ENCODE measurements at regions of chr6 and their contacts with region 1.

Region 1: GRCh38 chr6:23889001-23889400 is 237.0 kb upstream of the NRSN1 start:
- DNase-seq: no peak
- ATAC-seq: no peak
- H3K4me3 ChIP-seq: no peak overlapping the region
- H3K4me3 Mint-ChIP-seq: no peak overlapping the region
- H3K27ac ChIP-seq: no peak overlapping the region
- H3K27ac Mint-ChIP-seq: no peak overlapping the region
- H3K4me1 ChIP-seq: no peaks in the 10 kb centered on the region
- H3K4me1 Mint-ChIP-seq: no peaks in the 10 kb centered on the region
- H3K27me3 ChIP-seq: no peaks in the 10 kb centered on the region
- H3K27me3 Mint-ChIP-seq: peaks cover 0 to 4% (median 0%) of the 10 kb centered on the region in 5 donors

Region 2: GRCh38 chr6:23522792-23523547 is 366.0 kb before region 1 on chr6:
- CTCF ChIA-PET with region 1: no interaction called
- POLR2A ChIA-PET with region 1: no interaction called
- intact Hi-C with region 1: no loop called
- DNase-seq: no peak
- ATAC-seq: no peak
- H3K4me3 ChIP-seq: no peak overlapping the region
- H3K4me3 Mint-ChIP-seq: no peak overlapping the region
- H3K27ac ChIP-seq: no peak overlapping the region
- H3K27ac Mint-ChIP-seq: no peak overlapping the region
- H3K4me1 ChIP-seq: no peaks in the 10 kb centered on the region
- H3K4me1 Mint-ChIP-seq: no peaks in the 10 kb centered on the region
- H3K27me3 ChIP-seq: no peaks in the 10 kb centered on the region
- H3K27me3 Mint-ChIP-seq: peaks cover 0 to 5% (median 0%) of the 10 kb centered on the region in 5 donors

Region 3: DNA sequence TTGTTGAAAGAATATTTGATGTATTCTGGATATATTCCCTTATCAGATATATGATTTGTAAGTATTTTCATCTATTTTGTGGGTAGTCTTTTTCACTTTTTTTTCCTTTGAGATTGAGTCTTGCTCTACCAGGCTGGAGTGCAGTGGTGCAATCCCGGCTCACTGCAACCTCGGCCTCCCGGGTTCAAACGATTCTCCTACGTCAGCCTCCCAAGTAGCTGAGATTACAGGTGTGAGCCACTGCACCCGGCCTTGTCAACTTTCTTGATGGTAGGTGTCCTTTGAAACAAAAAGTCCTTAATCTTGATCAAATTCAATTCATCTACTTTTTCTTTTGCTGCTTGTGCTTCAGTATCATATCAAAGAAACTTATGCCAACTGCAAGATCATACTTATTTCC is 60.1 kb before region 1 on chr6:
- CTCF ChIA-PET with region 1: no interaction called
- POLR2A ChIA-PET with region 1: no interaction called
- intact Hi-C with region 1: no loop called
- DNase-seq: no peak
- ATAC-seq: no peak
- H3K4me3 ChIP-seq: no peak overlapping the region
- H3K4me3 Mint-ChIP-seq: no peak overlapping the region
- H3K27ac ChIP-seq: no peak overlapping the region
- H3K27ac Mint-ChIP-seq: no peak overlapping the region
- H3K4me1 ChIP-seq: no peaks in the 10 kb centered on the region
- H3K4me1 Mint-ChIP-seq: no peaks in the 10 kb centered on the region
- H3K27me3 ChIP-seq: no peaks in the 10 kb centered on the region
- H3K27me3 Mint-ChIP-seq: no peaks in the 10 kb centered on the region

Region 4: GRCh38 chr6:23841116-23841515 is 47.9 kb before region 1 on chr6:
- CTCF ChIA-PET with region 1: no interaction called
- POLR2A ChIA-PET with region 1: no interaction called
- intact Hi-C with region 1: loop called in 1 of 2 experiments (anchors 5 kb)
- DNase-seq: no peak
- ATAC-seq: no peak
- H3K4me3 ChIP-seq: no peak overlapping the region
- H3K4me3 Mint-ChIP-seq: no peak overlapping the region
- H3K27ac ChIP-seq: no peak overlapping the region
- H3K27ac Mint-ChIP-seq: no peak overlapping the region
- H3K4me1 ChIP-seq: no peaks in the 10 kb centered on the region
- H3K4me1 Mint-ChIP-seq: no peaks in the 10 kb centered on the region
- H3K27me3 ChIP-seq: no peaks in the 10 kb centered on the region
- H3K27me3 Mint-ChIP-seq: no peaks in the 10 kb centered on the region

Measured in naive thymus-derived CD4-positive, alpha-beta T cell (primary cell).